ENCODE measurements at regions of chr5 and their contacts with region 1.

Region 1: GRCh38 chr5:151252762-151253604 is at the start of gene GM2A:
- DNase-seq: peak; percentile 91 to 98 (median 96)
- ATAC-seq: peak; percentile 97
- H3K4me3 ChIP-seq: peak within 1 kb of the TSS; percentile 93
- H3K4me3 Mint-ChIP-seq: peak within 1 kb of the TSS; percentile 82 to 97 (median 94)
- H3K27ac ChIP-seq: peak within 1 kb of the TSS; percentile 78
- H3K27ac Mint-ChIP-seq: peak within 1 kb of the TSS; percentile 74 to 96 (median 95)
- H3K4me1 ChIP-seq: peaks cover 11 to 21% of the 10 kb centered on the region in 2 donors
- H3K4me1 Mint-ChIP-seq: peaks cover 30 to 50% (median 47%) of the 10 kb centered on the region in 7 donors
- H3K27me3 ChIP-seq: no peaks in the 10 kb centered on the region
- H3K27me3 Mint-ChIP-seq: no peaks in the 10 kb centered on the region
- total RNA-seq, gene GM2A: 11.1 to 45.6 (median 16.9) TPM

Region 2: GRCh38 chr5:150000256-150000989 is 1252.6 kb before region 1 on chr5 and contains the starts of genes HMGXB3 and TIGD6:
- CTCF ChIA-PET with region 1: no interaction called
- POLR2A ChIA-PET with region 1: no interaction called
- intact Hi-C with region 1: loop called in 1 of 2 experiments (anchors 2 kb)
- DNase-seq: peak; percentile 64 to 87 (median 74)
- ATAC-seq: peak; percentile 83
- H3K4me3 ChIP-seq: peak within 1 kb of the TSS; percentile 76
- H3K4me3 Mint-ChIP-seq: peak within 1 kb of the TSS; percentile 86 to 99 (median 93)
- H3K27ac ChIP-seq: peak within 1 kb of the TSS; percentile 80
- H3K27ac Mint-ChIP-seq: peak within 1 kb of the TSS; percentile 75 to 98 (median 94)
- H3K4me1 ChIP-seq: peaks cover 18 to 23% of the 10 kb centered on the region in 2 donors
- H3K4me1 Mint-ChIP-seq: peaks cover 33 to 55% (median 46%) of the 10 kb centered on the region in 7 donors
- H3K27me3 ChIP-seq: no peaks in the 10 kb centered on the region
- H3K27me3 Mint-ChIP-seq: no peaks in the 10 kb centered on the region
- total RNA-seq, gene HMGXB3: 27.2 to 40.6 (median 34.5) TPM
- total RNA-seq, gene TIGD6: 2.3 to 7.4 (median 2.8) TPM

Region 3: DNA sequence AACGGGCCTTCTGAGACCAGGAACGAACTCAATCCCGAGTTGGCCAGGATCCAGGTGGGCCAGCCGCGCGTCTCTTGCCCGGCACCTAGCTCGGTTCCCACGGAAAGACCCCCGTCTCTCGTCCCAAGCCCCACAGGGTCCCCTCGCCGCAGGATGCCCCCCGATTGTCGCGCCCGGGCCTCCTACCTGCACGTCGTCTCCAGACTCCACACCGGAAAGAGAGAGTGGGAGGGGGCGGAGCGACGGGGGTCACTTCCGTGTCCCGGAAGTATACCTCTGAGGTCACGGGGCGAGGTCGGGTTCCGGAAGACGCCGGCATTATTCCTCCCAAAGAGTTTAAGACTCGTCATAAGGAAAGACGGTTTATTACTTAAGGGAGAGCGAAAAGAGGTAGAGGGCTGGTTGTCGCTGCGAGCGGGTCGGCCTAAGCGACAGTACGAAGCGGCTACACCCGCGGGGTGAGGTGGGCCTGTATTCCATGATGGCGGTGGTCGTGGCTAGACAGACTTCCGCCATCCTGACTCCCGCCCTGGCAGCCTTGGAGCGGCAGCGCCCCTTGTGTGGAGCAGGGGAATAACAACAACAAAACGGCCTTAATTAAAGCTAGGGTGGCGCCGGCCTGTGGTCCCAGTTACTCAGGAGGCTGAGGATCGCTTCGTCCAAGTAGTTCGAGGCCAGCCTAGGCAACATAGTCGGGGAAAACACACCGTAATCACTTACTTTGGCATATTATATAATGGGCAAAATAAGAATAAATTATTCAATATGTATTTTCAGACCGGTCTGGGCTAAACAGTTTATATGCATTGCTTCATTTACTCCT is 803.3 kb before region 1 on chr5 and contains the start of gene RPS14:
- CTCF ChIA-PET with region 1: no interaction called
- POLR2A ChIA-PET with region 1: no interaction called
- intact Hi-C with region 1: loop called in 1 of 2 experiments (anchors 2 kb)
- DNase-seq: peak; percentile 89 to 98 (median 97)
- ATAC-seq: peak; percentile 97
- H3K4me3 ChIP-seq: peak within 1 kb of the TSS; percentile 68
- H3K4me3 Mint-ChIP-seq: peak within 1 kb of the TSS; percentile 89 to 100 (median 96)
- H3K27ac ChIP-seq: peak within 1 kb of the TSS; percentile 100
- H3K27ac Mint-ChIP-seq: peak within 1 kb of the TSS; percentile 97 to 100 (median 100)
- H3K4me1 ChIP-seq: peaks cover 18 to 23% of the 10 kb centered on the region in 2 donors
- H3K4me1 Mint-ChIP-seq: peaks cover 21 to 44% (median 37%) of the 10 kb centered on the region in 7 donors
- H3K27me3 ChIP-seq: no peaks in the 10 kb centered on the region
- H3K27me3 Mint-ChIP-seq: no peaks in the 10 kb centered on the region
- total RNA-seq, gene RPS14: 2,331 to 7,378 (median 6,414) TPM

Region 4: DNA sequence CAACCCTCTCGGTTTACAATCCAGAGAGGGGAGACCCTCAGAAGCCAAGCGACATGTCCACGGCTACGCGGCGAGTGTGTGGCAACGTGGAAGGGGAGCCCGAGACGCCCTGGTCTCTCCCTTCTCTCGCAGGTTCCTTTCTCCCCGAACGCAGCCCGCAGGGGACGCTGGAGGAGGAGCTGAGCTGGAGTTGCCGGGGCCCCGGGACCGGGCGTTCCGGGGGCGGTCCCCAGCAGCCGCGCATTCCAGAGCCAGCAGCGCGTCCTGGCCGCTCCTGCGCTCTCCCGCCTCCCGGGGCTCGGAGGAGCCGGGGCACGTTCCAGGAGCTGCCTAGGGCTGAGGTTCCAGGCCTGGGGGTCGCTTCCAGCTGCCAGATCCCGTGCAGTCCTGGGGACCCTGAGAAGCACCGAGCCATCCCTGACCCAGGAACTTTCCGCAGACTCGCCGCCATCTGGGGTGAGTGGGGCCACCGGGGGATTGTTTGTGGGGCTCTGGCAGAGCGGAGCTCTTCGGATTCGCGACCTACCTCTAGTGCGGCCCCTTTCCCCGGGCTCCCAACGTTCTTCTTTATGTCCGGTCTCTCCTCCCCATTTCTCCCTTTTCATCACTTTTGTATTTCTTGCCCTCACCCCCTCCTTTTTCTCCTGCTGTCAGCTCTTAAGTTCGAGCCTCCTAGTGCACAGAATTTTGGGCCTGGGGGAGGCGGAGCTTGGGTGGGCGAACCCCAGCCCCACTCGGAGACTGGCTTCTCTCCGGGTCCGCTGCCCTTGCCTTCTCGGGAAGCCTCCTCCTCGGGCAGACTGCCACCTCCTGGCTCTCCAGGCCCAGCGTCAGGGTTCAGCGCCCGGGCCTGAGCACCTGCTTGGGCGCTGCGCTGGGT is 474.2 kb before region 1 on chr5 and contains the start of gene SMIM3:
- CTCF ChIA-PET with region 1: interaction called, 3 read pairs
- POLR2A ChIA-PET with region 1: no interaction called
- intact Hi-C with region 1: loop called in 1 of 2 experiments (anchors 2 kb)
- DNase-seq: peak; percentile 45 to 71 (median 62)
- ATAC-seq: peak; percentile 77
- H3K4me3 ChIP-seq: peak within 1 kb of the TSS; percentile 80
- H3K4me3 Mint-ChIP-seq: peak within 1 kb of the TSS; percentile 95 to 100 (median 98)
- H3K27ac ChIP-seq: peak within 1 kb of the TSS; percentile 73
- H3K27ac Mint-ChIP-seq: peak within 1 kb of the TSS; percentile 91 to 98 (median 95)
- H3K4me1 ChIP-seq: peaks cover 17 to 41% of the 10 kb centered on the region in 2 donors
- H3K4me1 Mint-ChIP-seq: peaks cover 34 to 62% (median 57%) of the 10 kb centered on the region in 7 donors
- H3K27me3 ChIP-seq: no peaks in the 10 kb centered on the region
- H3K27me3 Mint-ChIP-seq: peaks cover 0 to 5% (median 0%) of the 10 kb centered on the region in 5 donors
- total RNA-seq, gene SMIM3: 5.2 to 17.9 (median 7.9) TPM

Region 5: GRCh38 chr5:151157426-151158286 is 95.3 kb before region 1 on chr5 and contains the start of gene ANXA6:
- CTCF ChIA-PET with region 1: no interaction called
- POLR2A ChIA-PET with region 1: interaction called, 3 read pairs
- intact Hi-C with region 1: loop called (anchors 1 to 2 kb)
- DNase-seq: peak; percentile 48 to 79 (median 57)
- ATAC-seq: peak; percentile 92
- H3K4me3 ChIP-seq: peak within 1 kb of the TSS; percentile 85
- H3K4me3 Mint-ChIP-seq: peak within 1 kb of the TSS; percentile 94 to 99 (median 96)
- H3K27ac ChIP-seq: peak within 1 kb of the TSS; percentile 92
- H3K27ac Mint-ChIP-seq: peak within 1 kb of the TSS; percentile 90 to 99 (median 96)
- H3K4me1 ChIP-seq: peaks cover 36 to 44% of the 10 kb centered on the region in 2 donors
- H3K4me1 Mint-ChIP-seq: peaks cover 39 to 69% (median 57%) of the 10 kb centered on the region in 7 donors
- H3K27me3 ChIP-seq: no peaks in the 10 kb centered on the region
- H3K27me3 Mint-ChIP-seq: no peaks in the 10 kb centered on the region
- total RNA-seq, gene ANXA6: 212 to 512 (median 272) TPM

Region 6: DNA sequence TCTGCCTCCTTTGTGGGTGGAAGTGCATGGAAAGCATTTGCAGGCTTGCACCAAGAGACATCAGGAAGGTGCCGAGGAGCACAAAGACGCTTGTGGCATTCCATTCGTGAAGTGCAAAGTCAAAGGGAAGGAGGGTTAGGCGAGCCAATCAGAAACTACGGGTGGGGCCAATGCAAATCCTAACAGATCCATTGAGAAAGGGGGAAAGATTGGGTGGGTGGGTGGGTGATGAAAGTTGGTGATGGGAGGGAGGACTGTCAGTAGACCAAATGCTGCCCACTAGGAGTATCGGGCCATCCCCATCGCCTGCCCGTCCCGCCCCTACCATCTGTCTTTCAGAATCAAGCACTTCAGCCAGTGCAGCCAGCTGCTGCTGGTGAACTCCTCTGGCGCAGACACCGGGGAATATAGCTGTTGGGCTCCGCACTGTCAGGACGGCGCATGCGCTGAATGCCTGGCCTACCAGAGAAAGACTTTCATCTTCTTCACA is 78.3 kb before region 1 on chr5:
- CTCF ChIA-PET with region 1: no interaction called
- POLR2A ChIA-PET with region 1: no interaction called
- intact Hi-C with region 1: no loop called
- DNase-seq: no peak
- ATAC-seq: no peak
- H3K4me3 ChIP-seq: no peak overlapping the region
- H3K4me3 Mint-ChIP-seq: no peak overlapping the region
- H3K27ac ChIP-seq: no peak overlapping the region
- H3K27ac Mint-ChIP-seq: peak overlapping the region in 7 of 9 donors; percentile 12 to 78 (median 55)
- H3K4me1 ChIP-seq: peaks cover 0 to 6% of the 10 kb centered on the region in 2 donors
- H3K4me1 Mint-ChIP-seq: peaks cover 11 to 52% (median 26%) of the 10 kb centered on the region in 7 donors
- H3K27me3 ChIP-seq: no peaks in the 10 kb centered on the region
- H3K27me3 Mint-ChIP-seq: no peaks in the 10 kb centered on the region

Region 7: DNA sequence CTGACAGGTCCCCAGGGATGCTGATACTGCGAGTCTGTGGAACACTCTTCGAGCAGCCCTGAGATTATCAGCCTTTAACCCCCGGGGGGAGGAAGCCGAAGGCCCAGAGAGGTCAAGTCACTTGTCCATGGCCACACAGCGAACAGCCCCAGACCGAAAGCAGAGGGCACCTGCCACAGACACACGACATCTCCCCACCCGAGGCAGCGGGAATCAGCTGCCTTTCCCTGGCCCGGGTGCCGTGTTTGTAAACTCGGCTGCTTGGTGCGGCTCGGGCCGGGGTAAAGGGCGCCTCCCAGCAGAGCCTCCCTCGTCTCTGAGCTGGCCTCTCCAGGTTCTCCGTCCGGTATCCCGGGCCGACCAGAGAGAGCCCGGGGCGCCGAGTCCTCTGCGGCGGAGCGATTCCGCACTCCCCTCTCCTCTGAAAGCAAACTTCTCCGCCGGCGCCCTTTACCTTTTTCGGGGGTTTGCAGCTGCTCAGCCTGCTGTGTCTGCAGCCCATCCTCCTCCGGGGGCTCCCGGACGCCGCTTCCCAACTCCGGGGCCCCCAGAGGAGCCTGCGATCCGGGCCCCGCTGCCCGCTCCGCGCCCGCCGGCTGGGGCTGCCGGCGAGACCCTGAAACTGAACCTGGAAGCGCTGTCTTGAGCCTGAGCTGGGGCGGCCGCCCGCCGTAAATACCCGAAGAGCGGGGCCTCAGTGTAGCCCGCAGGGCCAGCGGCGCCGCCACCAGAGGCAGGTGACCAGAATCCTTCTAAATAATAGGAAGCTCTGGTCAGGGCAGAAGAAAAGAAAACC is 29.3 kb before region 1 on chr5 and contains the start of gene CCDC69:
- CTCF ChIA-PET with region 1: interaction called, 7 read pairs
- POLR2A ChIA-PET with region 1: interaction called, 45 read pairs
- intact Hi-C with region 1: loop called (anchors 1 kb)
- DNase-seq: peak; percentile 27 to 64 (median 47)
- ATAC-seq: peak; percentile 69
- H3K4me3 ChIP-seq: peak within 1 kb of the TSS; percentile 95
- H3K4me3 Mint-ChIP-seq: peak within 1 kb of the TSS; percentile 80 to 97 (median 92)
- H3K27ac ChIP-seq: peak within 1 kb of the TSS; percentile 93
- H3K27ac Mint-ChIP-seq: peak within 1 kb of the TSS; percentile 87 to 98 (median 98)
- H3K4me1 ChIP-seq: peaks cover 51 to 56% of the 10 kb centered on the region in 2 donors
- H3K4me1 Mint-ChIP-seq: peaks cover 48 to 67% (median 60%) of the 10 kb centered on the region in 7 donors
- H3K27me3 ChIP-seq: no peaks in the 10 kb centered on the region
- H3K27me3 Mint-ChIP-seq: no peaks in the 10 kb centered on the region
- total RNA-seq, gene CCDC69: 63.6 to 104 (median 94.1) TPM

Region 8: DNA sequence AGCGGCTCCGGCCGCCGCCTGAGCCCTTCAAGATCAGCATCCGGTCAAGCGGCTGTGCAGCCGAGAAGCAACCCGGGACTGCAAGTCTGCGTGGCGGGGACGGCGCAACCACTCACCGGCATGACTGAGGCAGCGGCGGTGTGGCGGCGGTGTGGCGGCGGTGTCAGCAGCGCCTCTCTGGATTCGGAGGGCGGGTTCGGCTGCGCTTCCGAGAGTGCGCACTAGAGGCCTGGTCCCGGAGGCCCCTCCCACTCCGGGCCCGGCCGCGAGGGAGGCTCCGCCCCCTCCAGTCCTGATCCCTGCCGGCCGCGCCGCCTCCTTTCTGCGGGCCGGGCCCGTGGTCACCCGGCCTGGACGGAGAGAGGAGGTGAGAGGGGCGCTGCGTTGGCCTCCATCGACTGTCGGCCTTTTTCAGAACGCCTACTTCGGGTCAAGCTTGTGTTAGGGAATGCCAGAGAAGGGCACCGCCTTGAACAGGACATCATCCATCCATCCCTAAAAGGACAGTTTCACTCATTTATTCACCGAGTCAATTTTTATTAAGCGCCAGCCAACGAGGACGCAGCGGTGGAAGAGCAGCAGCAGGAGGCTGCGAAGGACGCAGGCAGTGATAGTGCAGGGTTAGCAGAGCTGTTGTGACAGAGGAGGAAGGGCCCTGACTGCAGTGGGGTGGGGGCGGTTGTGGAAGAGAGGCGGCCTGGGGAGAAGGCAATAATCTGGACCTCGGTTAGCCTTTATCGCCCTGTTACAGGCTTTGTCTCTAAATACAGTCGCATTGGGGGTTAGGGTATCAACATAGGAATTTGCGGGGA is 505.7 kb after region 1 on chr5 and contains the start of gene ATOX1:
- CTCF ChIA-PET with region 1: no interaction called
- POLR2A ChIA-PET with region 1: no interaction called
- intact Hi-C with region 1: loop called in 1 of 2 experiments (anchors 2 kb)
- DNase-seq: peak; percentile 85 to 93 (median 89)
- ATAC-seq: peak; percentile 100
- H3K4me3 ChIP-seq: peak within 1 kb of the TSS; percentile 94
- H3K4me3 Mint-ChIP-seq: peak within 1 kb of the TSS; percentile 88 to 99 (median 94)
- H3K27ac ChIP-seq: peak within 1 kb of the TSS; percentile 94
- H3K27ac Mint-ChIP-seq: peak within 1 kb of the TSS; percentile 88 to 98 (median 94)
- H3K4me1 ChIP-seq: peaks cover 14 to 20% of the 10 kb centered on the region in 2 donors
- H3K4me1 Mint-ChIP-seq: peaks cover 16 to 50% (median 39%) of the 10 kb centered on the region in 7 donors
- H3K27me3 ChIP-seq: no peaks in the 10 kb centered on the region
- H3K27me3 Mint-ChIP-seq: peaks cover 0 to 3% (median 0%) of the 10 kb centered on the region in 5 donors
- total RNA-seq, gene ATOX1: 14.8 to 58.2 (median 29.6) TPM

Measured in naive thymus-derived CD4-positive, alpha-beta T cell (primary cell).